BJ (cell line): ENCODE measurements at regions of chr11 and their contacts with region 1.

Region 1: GRCh38 chr11:14907411-14908213 is 15.6 kb upstream of the CYP2R1 start:
- DNase-seq: no peak
- H3K4me3 ChIP-seq: no peak overlapping the region
- H3K27me3 ChIP-seq: no peaks in the 10 kb centered on the region
- CTCF ChIP-seq: peak; percentile 76

Region 2: GRCh38 chr11:14789879-14790484 is 117.6 kb before region 1 on chr11:
- CTCF ChIA-PET with region 1: interaction called, 90 read pairs
- POLR2A ChIA-PET with region 1: no interaction called
- DNase-seq: no peak
- H3K4me3 ChIP-seq: no peak overlapping the region
- H3K27me3 ChIP-seq: no peaks in the 10 kb centered on the region
- CTCF ChIP-seq: peak; percentile 41

Region 3: DNA sequence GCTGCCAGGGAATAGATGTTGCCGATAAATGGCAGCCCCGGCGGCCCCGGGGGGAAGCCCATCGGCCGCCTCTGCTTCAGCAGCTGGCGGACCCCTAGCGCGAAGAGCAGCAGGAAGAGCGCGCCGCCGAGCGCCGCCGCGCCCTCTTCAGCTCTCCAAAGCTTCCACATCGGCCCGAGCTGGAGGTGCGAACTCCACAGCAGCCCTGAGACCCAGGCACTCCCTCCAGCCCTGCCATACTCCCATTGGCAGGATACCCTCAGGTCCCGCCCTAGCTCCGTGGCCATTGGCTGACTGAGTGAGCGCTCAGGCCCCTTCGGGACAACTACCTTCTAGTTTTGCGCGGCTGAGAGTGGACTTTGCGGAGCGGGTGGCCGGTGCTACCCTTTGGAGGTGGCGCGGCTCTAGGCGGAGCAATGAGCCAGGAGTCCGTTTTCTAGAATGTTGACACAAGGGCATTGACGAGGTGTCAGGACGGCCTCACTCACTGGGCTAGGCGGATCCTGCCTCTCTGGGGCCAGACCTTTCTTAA is 15.5 kb before region 1 on chr11 and contains the start of gene CYP2R1:
- CTCF ChIA-PET with region 1: interaction called, 24 read pairs
- POLR2A ChIA-PET with region 1: no interaction called
- DNase-seq: peak; percentile 88
- H3K4me3 ChIP-seq: peak within 1 kb of the TSS; percentile 58
- H3K27me3 ChIP-seq: no peaks in the 10 kb centered on the region; the same call in 1 of the 2 replicates
- CTCF ChIP-seq: no peak
- polyA plus RNA-seq, gene CYP2R1: 7.3 and 14.0 TPM in 2 replicates

Region 4: GRCh38 chr11:14934641-14935351 is 27.2 kb after region 1 on chr11:
- CTCF ChIA-PET with region 1: interaction called, 12 read pairs
- POLR2A ChIA-PET with region 1: no interaction called
- DNase-seq: no peak
- H3K4me3 ChIP-seq: no peak overlapping the region
- H3K27me3 ChIP-seq: no peaks in the 10 kb centered on the region
- CTCF ChIP-seq: no peak

Region 5: DNA sequence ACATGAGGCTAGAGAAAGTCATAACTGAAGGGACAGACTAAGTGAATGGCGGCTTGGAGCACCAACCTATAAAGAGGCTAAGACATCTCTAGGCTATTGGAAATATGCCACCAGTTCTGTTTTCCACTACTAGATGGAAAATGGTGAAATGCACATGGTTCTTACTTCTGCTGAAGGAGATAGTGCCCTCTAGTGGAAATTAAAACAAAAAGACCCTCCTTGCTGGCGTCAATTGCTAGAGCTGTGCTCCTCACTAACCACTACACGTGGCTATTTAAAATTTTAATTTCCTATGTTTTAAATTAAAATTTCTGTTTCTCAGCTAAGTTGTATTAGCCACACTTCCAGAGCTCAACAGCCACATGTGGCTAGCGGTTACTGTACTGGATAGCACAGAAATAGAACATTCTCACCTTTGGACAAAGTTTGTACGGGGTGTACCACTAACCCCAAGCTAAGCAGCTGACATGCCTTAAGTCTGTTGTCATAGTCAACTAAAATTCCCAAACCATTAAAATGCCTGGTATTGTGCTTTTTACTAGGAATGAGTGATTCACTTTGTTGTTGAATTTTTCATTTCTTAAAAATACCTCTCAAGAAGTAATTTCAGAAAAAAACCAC is 98.6 kb after region 1 on chr11:
- CTCF ChIA-PET with region 1: interaction called, 19 read pairs
- POLR2A ChIA-PET with region 1: no interaction called
- DNase-seq: no peak
- H3K4me3 ChIP-seq: no peak overlapping the region
- H3K27me3 ChIP-seq: no peaks in the 10 kb centered on the region
- CTCF ChIP-seq: peak; percentile 44

Region 6: GRCh38 chr11:15074206-15075161 is 166.9 kb after region 1 on chr11:
- CTCF ChIA-PET with region 1: interaction called, 129 read pairs
- POLR2A ChIA-PET with region 1: no interaction called
- DNase-seq: no peak
- H3K4me3 ChIP-seq: no peak overlapping the region
- H3K27me3 ChIP-seq: peaks cover 21% of the 10 kb centered on the region
- CTCF ChIP-seq: peak; percentile 77

Region 7: GRCh38 chr11:15208378-15209222 is 301.0 kb after region 1 on chr11:
- CTCF ChIA-PET with region 1: interaction called, 16 read pairs
- POLR2A ChIA-PET with region 1: no interaction called
- DNase-seq: no peak
- H3K4me3 ChIP-seq: no peak overlapping the region
- H3K27me3 ChIP-seq: peaks cover 6% of the 10 kb centered on the region
- CTCF ChIP-seq: peak; percentile 90